ENCODE measurements at regions of chr1 and their contacts with region 1.

Region 1: GRCh38 chr1:157992031-157992832 is 1.2 kb upstream of the KIRREL1 start:
- DNase-seq: peak; percentile 46 to 75
- ATAC-seq: peak; percentile 79

Region 2: DNA sequence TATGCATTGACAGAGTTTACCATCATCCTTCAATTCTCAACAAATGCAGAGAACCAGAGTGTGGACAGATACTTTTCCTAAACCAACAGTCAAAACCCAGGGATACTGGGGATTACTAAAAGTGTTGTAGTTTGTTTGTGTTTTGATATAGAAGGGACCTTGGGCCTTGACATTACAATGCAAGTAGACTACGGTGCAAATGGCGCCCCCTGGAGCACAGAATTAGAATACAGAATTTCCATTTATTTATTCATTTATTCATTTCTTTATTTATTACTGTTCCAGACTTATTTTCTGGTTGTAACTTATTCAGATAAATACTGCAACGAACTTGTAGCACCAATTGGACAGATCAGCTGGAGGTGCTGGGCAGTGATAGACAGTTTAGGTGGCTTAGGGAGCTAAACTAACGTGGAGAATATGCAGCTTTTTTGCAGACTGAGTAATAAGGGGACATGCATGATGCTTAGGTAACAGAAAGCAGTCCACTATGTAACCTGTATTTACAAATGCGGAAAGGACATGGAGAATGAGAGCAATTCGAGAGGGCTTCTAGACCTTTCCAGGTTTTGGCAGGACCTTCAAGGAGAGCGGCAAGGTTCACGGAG is 43.8 kb after region 1 on chr1:
- intact Hi-C with region 1: loop called (anchors 5 kb)
- DNase-seq: peak in 1 of 2 donors; percentile 37
- ATAC-seq: no peak

Region 3: DNA sequence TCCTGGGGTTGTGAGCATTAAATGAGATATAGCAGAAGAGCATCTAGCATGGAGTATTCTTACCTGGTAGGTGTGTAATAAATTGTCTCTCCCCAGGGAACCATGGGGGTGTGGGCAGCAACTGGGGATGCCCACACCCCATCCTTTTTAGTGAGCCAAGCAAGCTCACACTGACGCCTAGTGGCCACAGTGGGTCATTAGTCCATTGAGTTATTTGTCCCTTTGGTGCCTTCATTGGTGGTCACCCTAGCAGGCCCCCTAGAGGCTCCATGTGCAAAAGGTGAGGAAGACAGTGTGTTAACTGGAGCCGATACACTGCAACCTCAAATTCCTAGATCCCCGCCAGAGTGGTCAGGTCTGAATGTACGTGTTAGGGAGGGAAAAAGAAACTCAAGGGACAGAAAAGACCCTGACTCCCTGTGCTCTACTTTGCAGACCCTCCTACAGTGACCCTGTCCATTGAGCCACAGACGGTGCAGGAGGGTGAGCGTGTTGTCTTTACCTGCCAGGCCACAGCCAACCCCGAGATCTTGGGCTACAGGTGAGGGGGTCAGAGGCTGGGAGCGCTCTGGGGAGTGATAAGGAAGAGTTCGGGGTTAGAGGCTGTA is 95.2 kb after region 1 on chr1:
- intact Hi-C with region 1: loop called (anchors 2 to 10 kb)
- DNase-seq: peak in 1 of 2 donors; percentile 65
- ATAC-seq: peak; percentile 71

Region 4: DNA sequence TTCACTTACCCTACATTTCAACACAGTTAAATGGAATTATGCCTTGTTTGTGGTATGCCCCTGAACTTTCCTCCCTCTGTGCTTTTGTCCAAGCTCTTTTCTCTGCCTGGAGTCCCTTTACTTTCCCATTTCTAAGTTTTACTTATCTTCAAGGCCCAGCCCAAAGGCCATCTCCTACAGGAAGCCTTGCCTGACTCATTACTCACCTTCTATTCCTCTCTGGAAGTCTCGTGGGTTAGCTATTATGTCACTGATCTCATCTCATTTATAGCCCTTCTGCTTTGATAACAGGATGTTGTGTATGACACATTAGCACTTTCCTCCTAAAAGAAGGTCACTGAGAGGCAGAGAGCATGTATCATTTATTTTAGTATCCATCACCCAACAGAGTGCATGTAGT is 109.7 kb after region 1 on chr1:
- intact Hi-C with region 1: no loop called
- DNase-seq: no peak
- ATAC-seq: peak; percentile 97